Naive thymus-derived CD4-positive, alpha-beta T cell (primary cell): ENCODE measurements at regions of chr11 and their contacts with region 1.

Region 1: GRCh38 chr11:117226388-117227385 is 5.2 kb downstream of the PCSK7 start:
- DNase-seq: peak in 7 of 9 donors; percentile 55 to 74 (median 69)
- ATAC-seq: peak; percentile 90
- H3K4me3 ChIP-seq: no peak overlapping the region
- H3K4me3 Mint-ChIP-seq: peak overlapping the region in 5 of 10 donors; percentile 18 to 43 (median 33)
- H3K27ac ChIP-seq: peak overlapping the region; percentile 37
- H3K27ac Mint-ChIP-seq: peak overlapping the region in 8 of 9 donors; percentile 52 to 94 (median 76)
- H3K4me1 ChIP-seq: peaks cover 32 to 33% of the 10 kb centered on the region in 2 donors
- H3K4me1 Mint-ChIP-seq: peaks cover 36 to 54% (median 42%) of the 10 kb centered on the region in 7 donors
- H3K27me3 ChIP-seq: no peaks in the 10 kb centered on the region
- H3K27me3 Mint-ChIP-seq: no peaks in the 10 kb centered on the region

Region 2: DNA sequence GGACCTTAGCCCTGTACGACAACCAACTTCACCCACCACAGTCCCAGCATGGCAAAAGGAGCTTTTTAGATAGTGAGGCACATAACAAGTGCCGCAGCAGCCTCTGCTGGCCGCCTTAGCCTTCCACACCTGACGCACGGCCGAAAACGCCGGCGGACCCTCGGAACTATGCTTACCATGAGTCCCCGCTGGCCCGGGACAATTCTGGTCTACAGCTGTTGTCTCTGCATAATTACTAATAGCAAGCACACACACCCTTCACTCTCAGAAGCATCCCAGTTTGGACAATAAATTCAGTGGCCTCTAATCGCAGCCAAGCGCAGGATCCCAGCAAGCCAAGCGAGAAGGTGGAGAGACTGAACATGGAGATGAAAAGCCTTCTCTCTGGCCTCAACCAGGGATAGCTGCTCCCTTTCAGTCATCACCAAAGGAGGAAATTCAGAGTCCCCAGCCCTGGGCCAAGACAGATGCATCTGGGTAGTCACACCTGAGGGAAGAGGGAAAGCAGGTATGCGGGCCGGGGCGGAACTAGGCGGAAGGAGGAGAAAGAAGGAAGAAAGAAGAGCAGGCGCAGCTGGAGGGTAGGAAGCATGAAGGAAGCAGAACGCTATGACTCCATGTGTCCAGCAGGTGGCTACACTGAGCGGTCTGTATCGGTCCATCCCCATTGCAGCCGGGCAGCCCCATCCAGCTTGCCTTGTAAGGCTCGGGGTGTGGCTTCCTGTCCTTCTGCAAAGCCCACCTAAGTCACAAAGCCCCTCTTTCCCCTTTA is 494.2 kb before region 1 on chr11:
- CTCF ChIA-PET with region 1: interaction called, 4 read pairs
- POLR2A ChIA-PET with region 1: no interaction called
- intact Hi-C with region 1: loop called (anchors 1 to 5 kb)
- DNase-seq: peak in 7 of 9 donors; percentile 24 to 56 (median 40)
- ATAC-seq: peak; percentile 91
- H3K4me3 ChIP-seq: no peak overlapping the region
- H3K4me3 Mint-ChIP-seq: peak overlapping the region in 1 of 10 donors; percentile 42
- H3K27ac ChIP-seq: no peak overlapping the region
- H3K27ac Mint-ChIP-seq: peak overlapping the region in 2 of 9 donors; percentile 6 to 57
- H3K4me1 ChIP-seq: peaks cover 0 to 5% of the 10 kb centered on the region in 2 donors
- H3K4me1 Mint-ChIP-seq: peaks cover 4 to 15% (median 8%) of the 10 kb centered on the region in 7 donors
- H3K27me3 ChIP-seq: no peaks in the 10 kb centered on the region
- H3K27me3 Mint-ChIP-seq: peaks cover 0 to 6% (median 0%) of the 10 kb centered on the region in 5 donors

Region 3: GRCh38 chr11:116853461-116854073 is 373.1 kb before region 1 on chr11:
- CTCF ChIA-PET with region 1: interaction called, 6 read pairs
- POLR2A ChIA-PET with region 1: interaction called, 3 read pairs
- intact Hi-C with region 1: loop called in 1 of 2 experiments (anchors 1 kb)
- DNase-seq: peak in 8 of 9 donors; percentile 53 to 84 (median 77)
- ATAC-seq: peak; percentile 98
- H3K4me3 ChIP-seq: peak overlapping the region; percentile 38
- H3K4me3 Mint-ChIP-seq: peak overlapping the region; percentile 47 to 84 (median 70)
- H3K27ac ChIP-seq: peak overlapping the region; percentile 4
- H3K27ac Mint-ChIP-seq: peak overlapping the region; percentile 41 to 92 (median 81)
- H3K4me1 ChIP-seq: peaks cover 57 to 70% of the 10 kb centered on the region in 2 donors
- H3K4me1 Mint-ChIP-seq: peaks cover 52 to 78% (median 76%) of the 10 kb centered on the region in 7 donors
- H3K27me3 ChIP-seq: no peaks in the 10 kb centered on the region
- H3K27me3 Mint-ChIP-seq: no peaks in the 10 kb centered on the region

Region 4: GRCh38 chr11:117107701-117108590 is 118.7 kb before region 1 on chr11:
- CTCF ChIA-PET with region 1: interaction called, 9 read pairs
- POLR2A ChIA-PET with region 1: interaction called, 5 read pairs
- intact Hi-C with region 1: loop called (anchors 1 to 2 kb)
- DNase-seq: no peak
- ATAC-seq: no peak
- H3K4me3 ChIP-seq: no peak overlapping the region
- H3K4me3 Mint-ChIP-seq: no peak overlapping the region
- H3K27ac ChIP-seq: no peak overlapping the region
- H3K27ac Mint-ChIP-seq: no peak overlapping the region
- H3K4me1 ChIP-seq: no peaks in the 10 kb centered on the region
- H3K4me1 Mint-ChIP-seq: peaks cover 0 to 5% (median 0%) of the 10 kb centered on the region in 7 donors
- H3K27me3 ChIP-seq: no peaks in the 10 kb centered on the region
- H3K27me3 Mint-ChIP-seq: peaks cover 0 to 5% (median 0%) of the 10 kb centered on the region in 5 donors

Region 5: GRCh38 chr11:117178210-117179034 is 48.3 kb before region 1 on chr11 and contains the start of gene SIDT2:
- CTCF ChIA-PET with region 1: interaction called, 20 read pairs
- POLR2A ChIA-PET with region 1: interaction called, 37 read pairs
- intact Hi-C with region 1: loop called (anchors 1 kb)
- DNase-seq: peak; percentile 75 to 89 (median 87)
- ATAC-seq: peak; percentile 94
- H3K4me3 ChIP-seq: peak within 1 kb of the TSS; percentile 87
- H3K4me3 Mint-ChIP-seq: peak within 1 kb of the TSS; percentile 92 to 98 (median 94)
- H3K27ac ChIP-seq: peak within 1 kb of the TSS; percentile 85
- H3K27ac Mint-ChIP-seq: peak within 1 kb of the TSS; percentile 88 to 98 (median 96)
- H3K4me1 ChIP-seq: peaks cover 12 to 26% of the 10 kb centered on the region in 2 donors
- H3K4me1 Mint-ChIP-seq: peaks cover 26 to 42% (median 32%) of the 10 kb centered on the region in 7 donors
- H3K27me3 ChIP-seq: no peaks in the 10 kb centered on the region
- H3K27me3 Mint-ChIP-seq: no peaks in the 10 kb centered on the region
- total RNA-seq, gene SIDT2: 31.7 to 187 (median 60.5) TPM